Spleen (tissue), 13 donors: ENCODE measurements at regions of chr5 and their contacts with region 1.

Region 1: DNA sequence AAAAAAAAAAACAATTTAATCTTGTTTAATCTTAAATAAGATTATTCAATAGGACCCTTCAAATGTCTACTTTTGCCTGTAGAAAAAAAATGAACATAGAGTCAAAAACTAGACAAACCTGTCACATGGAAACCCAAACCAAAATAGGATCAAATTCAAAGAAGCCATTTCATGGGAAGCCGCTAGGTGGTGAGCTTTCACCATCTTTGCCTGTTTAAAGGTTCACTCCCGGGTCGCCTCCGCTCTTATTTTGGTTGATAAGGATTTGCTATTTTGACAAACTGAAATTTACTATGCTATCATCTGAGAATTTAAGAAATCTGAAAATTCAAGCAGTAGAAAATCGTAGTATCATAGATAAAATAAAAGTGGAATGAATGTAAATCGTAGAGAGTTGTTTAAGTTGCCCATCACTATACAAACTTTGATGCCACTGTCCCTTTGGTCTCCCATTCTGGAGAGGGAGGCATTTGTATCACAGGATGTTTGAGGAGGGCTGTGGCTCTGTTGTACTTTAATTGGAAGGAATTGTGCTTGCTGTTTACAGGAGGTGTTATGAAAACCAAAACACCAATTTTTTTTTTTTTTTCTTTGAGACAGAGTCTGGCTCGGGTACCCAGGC is 43.5 kb upstream of the DNAH5 start:
- DNase-seq: no peak
- H3K4me3 ChIP-seq: no peak overlapping the region
- H3K27ac ChIP-seq: no peak overlapping the region
- H3K4me1 ChIP-seq: peaks cover 0 to 5% (median 4%) of the 10 kb centered on the region in 6 donors
- H3K27me3 ChIP-seq: peaks cover 0 to 14% (median 0%) of the 10 kb centered on the region in 7 donors
- CTCF ChIP-seq: peak; percentile 47 to 78 (median 70)
- POLR2A ChIP-seq: no peak

Region 2: GRCh38 chr5:14108170-14108996 is 120.4 kb after region 1 on chr5:
- intact Hi-C with region 1: loop called (anchors 10 kb)
- DNase-seq: no peak
- H3K4me3 ChIP-seq: peak overlapping the region in 2 of 8 donors; percentile 24 to 50
- H3K27ac ChIP-seq: no peak overlapping the region
- H3K4me1 ChIP-seq: peaks cover 0 to 24% (median 8%) of the 10 kb centered on the region in 6 donors
- H3K27me3 ChIP-seq: peaks cover 0 to 9% (median 0%) of the 10 kb centered on the region in 7 donors
- CTCF ChIP-seq: peak; percentile 37 to 81 (median 74)
- POLR2A ChIP-seq: no peak

Region 3: GRCh38 chr5:14270209-14270702 is 282.3 kb after region 1 on chr5:
- intact Hi-C with region 1: loop called (anchors 10 kb)
- DNase-seq: no peak
- H3K4me3 ChIP-seq: no peak overlapping the region
- H3K27ac ChIP-seq: peak overlapping the region in 5 of 8 donors; percentile 13 to 55 (median 53)
- H3K4me1 ChIP-seq: peaks cover 16 to 55% (median 28%) of the 10 kb centered on the region in 6 donors
- H3K27me3 ChIP-seq: no peaks in the 10 kb centered on the region
- CTCF ChIP-seq: peak; percentile 39 to 78 (median 69)
- POLR2A ChIP-seq: no peak

Region 4: DNA sequence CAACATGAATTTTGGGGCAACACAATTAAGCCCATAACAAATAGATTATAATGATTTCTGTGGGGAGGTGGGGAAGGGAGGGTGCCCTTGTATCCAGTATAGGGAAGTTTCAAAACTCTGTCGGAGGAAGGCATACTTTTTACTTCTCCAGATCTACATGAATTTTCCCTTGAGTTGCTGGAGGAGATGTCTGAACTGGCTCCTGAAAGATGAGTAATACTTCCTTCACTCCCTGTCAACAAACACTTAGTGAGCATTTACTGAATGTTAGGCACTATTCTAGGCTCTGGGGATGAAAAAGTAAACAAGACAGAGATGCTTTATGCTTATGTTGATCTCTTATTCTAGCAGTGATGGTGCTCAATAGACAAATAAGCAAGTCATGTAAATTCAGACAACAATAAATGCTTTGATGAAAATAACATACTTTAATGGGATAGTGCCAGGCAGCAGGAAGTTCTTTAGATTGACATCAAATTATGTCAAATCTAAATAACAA is 1081.5 kb after region 1 on chr5:
- intact Hi-C with region 1: no loop called
- DNase-seq: no peak
- H3K4me3 ChIP-seq: no peak overlapping the region
- H3K27ac ChIP-seq: no peak overlapping the region
- H3K4me1 ChIP-seq: no peaks in the 10 kb centered on the region
- H3K27me3 ChIP-seq: no peaks in the 10 kb centered on the region
- CTCF ChIP-seq: no peak
- POLR2A ChIP-seq: no peak